Naive thymus-derived CD8-positive, alpha-beta T cell (primary cell): ENCODE measurements at regions of chr2 and their contacts with region 1.

Region 1: GRCh38 chr2:84925724-84926376 is 20.4 kb downstream of the TMSB10 start:
- DNase-seq: peak; percentile 94 to 99 (median 97)
- ATAC-seq: peak; percentile 76 to 81
- H3K4me3 Mint-ChIP-seq: peak overlapping the region; percentile 89 to 100 (median 98)
- H3K27ac Mint-ChIP-seq: peak overlapping the region; percentile 94 to 100 (median 98)
- H3K4me1 Mint-ChIP-seq: peaks cover 24 to 54% (median 44%) of the 10 kb centered on the region in 4 donors
- H3K27me3 Mint-ChIP-seq: no peaks in the 10 kb centered on the region

Region 2: GRCh38 chr2:84741296-84741765 is 184.5 kb before region 1 on chr2:
- POLR2A ChIA-PET with region 1: interaction called, 11 read pairs
- DNase-seq: peak in 9 of 10 donors; percentile 2 to 71 (median 46)
- ATAC-seq: peak; percentile 98 to 99
- H3K4me3 Mint-ChIP-seq: peak overlapping the region in 6 of 10 donors; percentile 4 to 64 (median 28)
- H3K27ac Mint-ChIP-seq: peak overlapping the region in 9 of 10 donors; percentile 38 to 88 (median 71)
- H3K4me1 Mint-ChIP-seq: peaks cover 28 to 61% (median 38%) of the 10 kb centered on the region in 4 donors
- H3K27me3 Mint-ChIP-seq: no peaks in the 10 kb centered on the region

Region 3: DNA sequence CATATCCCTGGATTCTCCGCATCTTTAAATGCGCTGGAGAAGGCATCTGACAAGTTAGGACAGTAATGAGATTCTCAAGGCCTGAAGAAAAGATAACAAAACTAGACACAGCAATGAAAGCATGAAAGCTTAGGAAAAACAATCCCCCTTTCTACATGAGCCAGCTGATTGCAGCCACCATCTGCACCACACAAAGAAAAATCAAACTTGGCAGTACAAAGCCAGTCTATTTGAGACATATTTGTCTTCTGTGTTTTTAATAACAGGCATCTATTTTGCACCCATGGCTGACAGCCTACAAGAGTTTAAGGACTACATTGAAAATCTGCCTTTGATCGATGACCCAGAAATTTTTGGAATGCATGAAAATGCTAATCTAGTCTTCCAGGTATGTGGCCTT is 128.6 kb before region 1 on chr2:
- POLR2A ChIA-PET with region 1: no interaction called
- DNase-seq: no peak
- ATAC-seq: no peak
- H3K4me3 Mint-ChIP-seq: no peak overlapping the region
- H3K27ac Mint-ChIP-seq: peak overlapping the region in 3 of 10 donors; percentile 14 to 67 (median 43)
- H3K4me1 Mint-ChIP-seq: peaks cover 12 to 25% (median 22%) of the 10 kb centered on the region in 4 donors
- H3K27me3 Mint-ChIP-seq: no peaks in the 10 kb centered on the region

Region 4: DNA sequence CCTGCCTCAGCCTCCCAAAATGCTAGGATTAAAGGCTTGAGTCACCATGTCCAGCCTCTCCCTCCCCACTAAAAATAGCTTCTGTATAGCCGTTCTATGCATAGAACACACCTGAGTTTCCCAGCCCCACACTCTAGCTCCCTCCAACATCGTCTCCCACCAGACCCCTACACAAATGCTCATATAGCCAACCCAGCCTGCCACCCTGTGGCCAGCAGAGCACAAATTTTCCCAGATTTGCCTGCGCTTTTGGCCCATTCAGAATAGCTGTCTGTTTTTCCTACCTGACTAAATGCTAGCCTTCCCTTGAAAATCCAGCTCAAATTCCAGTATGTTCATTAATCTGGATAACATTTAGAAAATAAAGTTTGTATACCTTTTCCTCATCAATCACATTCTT is 67.7 kb before region 1 on chr2:
- POLR2A ChIA-PET with region 1: interaction called, 13 read pairs
- DNase-seq: peak in 1 of 10 donors; percentile 18
- ATAC-seq: no peak
- H3K4me3 Mint-ChIP-seq: peak overlapping the region; percentile 4 to 87 (median 80)
- H3K27ac Mint-ChIP-seq: peak overlapping the region; percentile 93 to 99 (median 98)
- H3K4me1 Mint-ChIP-seq: peaks cover 75 to 96% (median 94%) of the 10 kb centered on the region in 4 donors
- H3K27me3 Mint-ChIP-seq: no peaks in the 10 kb centered on the region

Region 5: GRCh38 chr2:84894758-84895520 is 30.9 kb before region 1 on chr2:
- POLR2A ChIA-PET with region 1: interaction called, 361 read pairs
- DNase-seq: peak in 4 of 10 donors; percentile 26 to 54 (median 50)
- ATAC-seq: peak; percentile 74 to 80
- H3K4me3 Mint-ChIP-seq: peak overlapping the region; percentile 58 to 86 (median 70)
- H3K27ac Mint-ChIP-seq: peak overlapping the region; percentile 56 to 98 (median 96)
- H3K4me1 Mint-ChIP-seq: peaks cover 29 to 72% (median 62%) of the 10 kb centered on the region in 4 donors
- H3K27me3 Mint-ChIP-seq: no peaks in the 10 kb centered on the region

Region 6: DNA sequence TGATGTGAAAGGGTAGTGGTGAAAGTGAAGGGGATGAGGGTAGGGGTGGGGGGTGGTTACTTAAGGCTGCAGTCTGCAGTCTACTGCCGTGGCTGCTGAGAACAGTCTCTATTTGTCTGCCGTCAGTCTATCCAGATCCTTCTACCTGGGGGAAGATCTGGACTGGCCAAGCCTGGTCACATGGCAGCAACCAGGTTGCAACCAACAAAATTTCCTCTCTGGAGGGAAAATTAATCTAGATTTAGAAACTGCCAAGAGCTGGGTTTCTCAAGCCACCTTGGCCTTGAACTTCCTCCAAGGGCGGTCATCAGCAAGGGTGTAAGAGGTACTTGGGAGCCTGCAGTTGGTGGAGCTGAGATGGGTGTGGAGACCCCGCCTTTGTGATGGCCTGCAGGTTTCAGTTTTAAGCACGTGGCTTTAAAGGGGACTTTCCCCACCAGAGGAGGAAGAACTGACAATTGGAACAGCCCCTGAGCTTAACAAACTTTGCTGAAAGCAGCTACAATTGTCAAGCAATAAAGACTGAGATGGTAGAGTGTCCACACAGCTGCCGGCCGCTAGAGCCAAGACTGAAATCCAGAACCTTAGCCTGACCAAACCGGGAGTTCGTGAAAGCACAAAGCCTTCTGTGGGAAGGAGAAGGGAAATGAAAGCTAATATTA is 13.7 kb after region 1 on chr2:
- POLR2A ChIA-PET with region 1: interaction called, 31 read pairs
- DNase-seq: peak; percentile 22 to 82 (median 61)
- ATAC-seq: peak; percentile 90
- H3K4me3 Mint-ChIP-seq: peak overlapping the region; percentile 62 to 90 (median 82)
- H3K27ac Mint-ChIP-seq: peak overlapping the region; percentile 90 to 99 (median 98)
- H3K4me1 Mint-ChIP-seq: peaks cover 10 to 56% (median 28%) of the 10 kb centered on the region in 4 donors
- H3K27me3 Mint-ChIP-seq: no peaks in the 10 kb centered on the region

Region 7: DNA sequence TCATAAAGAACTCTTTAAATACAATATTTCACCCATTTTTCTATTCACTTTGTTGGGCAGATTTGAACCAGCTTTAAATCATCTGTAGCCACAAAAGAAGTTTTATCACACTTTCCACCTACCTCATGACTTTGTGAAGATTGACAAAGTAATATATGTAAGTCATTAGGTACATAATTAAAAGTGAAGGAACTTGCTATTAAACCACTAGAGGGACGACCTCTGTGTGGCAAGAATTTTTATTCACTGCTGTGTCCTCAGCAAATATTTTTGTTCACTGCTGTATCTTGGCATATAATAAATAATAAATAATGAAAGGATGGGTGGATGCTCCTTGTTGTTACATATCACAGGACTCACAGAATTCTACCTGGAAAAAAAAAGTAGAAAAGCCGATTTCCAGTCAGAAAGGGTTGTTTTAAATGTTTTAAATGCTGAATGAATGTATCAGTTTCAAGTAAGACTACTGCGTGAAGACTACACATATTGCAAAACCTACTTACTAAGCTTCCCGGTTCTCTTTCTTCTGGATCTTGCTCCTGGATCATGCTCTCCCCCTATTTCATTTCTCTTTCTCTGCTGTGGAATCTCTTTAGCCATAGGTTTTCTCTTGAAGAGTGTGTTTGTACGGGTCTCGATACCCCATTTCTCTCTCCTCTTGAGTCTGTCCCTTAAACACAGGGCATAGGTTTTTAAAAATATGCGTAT is 90.0 kb after region 1 on chr2:
- POLR2A ChIA-PET with region 1: interaction called, 12 read pairs
- DNase-seq: no peak
- ATAC-seq: no peak
- H3K4me3 Mint-ChIP-seq: no peak overlapping the region
- H3K27ac Mint-ChIP-seq: peak overlapping the region in 7 of 10 donors; percentile 27 to 73 (median 56)
- H3K4me1 Mint-ChIP-seq: peaks cover 32 to 86% (median 74%) of the 10 kb centered on the region in 4 donors
- H3K27me3 Mint-ChIP-seq: no peaks in the 10 kb centered on the region